Thyroid gland (tissue), 4 donors: ENCODE measurements at regions of chr1 and their contacts with region 1.

Region 1: DNA sequence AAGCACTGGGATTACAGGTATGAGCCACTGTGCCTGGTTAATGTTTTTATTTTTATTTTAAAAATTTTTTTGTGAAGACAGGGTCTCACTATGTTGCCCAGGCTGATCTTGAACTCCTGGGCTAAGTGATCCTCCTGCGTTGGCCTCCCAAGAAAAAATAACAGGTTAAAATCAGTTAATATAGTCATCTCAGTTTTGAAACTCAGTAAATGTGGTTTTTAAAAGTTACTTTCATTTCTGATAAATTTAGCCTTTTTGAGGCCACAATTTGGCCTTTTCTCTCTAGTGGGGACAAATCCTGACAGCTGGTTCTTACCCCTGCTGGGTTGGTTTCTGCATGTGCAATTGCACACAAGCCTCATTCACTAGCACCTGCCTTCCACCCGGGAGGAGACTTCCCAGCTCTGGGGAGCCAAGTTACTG is 13.3 kb downstream of the PMF1 start:
- DNase-seq: no peak
- H3K4me3 ChIP-seq: no peak overlapping the region
- H3K27ac ChIP-seq: peak overlapping the region in 1 of 3 donors; percentile 26
- H3K4me1 ChIP-seq: peaks cover 0 to 4% of the 10 kb centered on the region in 2 donors
- H3K27me3 ChIP-seq: no peaks in the 10 kb centered on the region
- CTCF ChIP-seq: no peak
- POLR2A ChIP-seq: no peak

Region 2: DNA sequence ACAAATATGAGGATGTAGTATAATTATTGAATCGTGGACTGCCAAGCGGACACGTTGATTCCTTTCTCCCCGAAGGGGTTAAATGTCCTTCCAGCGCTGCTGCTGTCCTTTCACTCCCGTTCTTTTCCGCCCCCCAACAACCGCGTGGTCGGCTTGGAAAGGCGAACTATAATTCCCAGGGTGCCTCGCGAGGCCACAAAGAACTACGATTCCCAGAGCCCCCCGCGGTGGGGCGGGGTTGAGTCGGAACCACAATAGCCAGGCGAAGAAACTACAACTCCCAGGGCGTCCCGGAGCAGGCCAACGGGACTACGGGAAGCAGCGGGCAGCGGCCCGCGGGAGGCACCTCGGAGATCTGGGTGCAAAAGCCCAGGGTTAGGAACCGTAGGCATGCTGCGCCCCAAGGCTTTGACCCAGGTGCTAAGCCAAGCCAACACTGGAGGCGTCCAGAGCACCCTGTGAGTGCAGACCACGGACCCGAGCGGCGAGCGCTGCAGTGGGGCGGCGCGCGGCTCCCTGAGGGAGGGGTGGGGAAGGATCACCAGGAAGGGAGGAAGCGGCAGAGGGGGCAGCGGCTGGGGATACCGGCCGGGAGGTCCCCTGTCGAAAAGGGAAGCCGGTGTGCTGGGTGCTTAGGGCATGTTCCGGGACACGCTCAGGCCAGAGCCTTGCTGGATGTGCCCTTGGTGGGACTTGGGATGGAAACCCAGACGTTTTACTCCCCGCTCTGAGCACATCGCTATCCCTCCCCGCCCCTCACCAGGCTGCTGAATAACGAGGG is 171.4 kb before region 1 on chr1 and contains the start of gene LAMTOR2:
- intact Hi-C with region 1: no loop called
- DNase-seq: peak; percentile 98 to 99
- H3K4me3 ChIP-seq: peak within 1 kb of the TSS; percentile 60 to 88 (median 84)
- H3K27ac ChIP-seq: peak within 1 kb of the TSS; percentile 76 to 88 (median 83)
- H3K4me1 ChIP-seq: peaks cover 8 to 9% of the 10 kb centered on the region in 2 donors
- H3K27me3 ChIP-seq: no peaks in the 10 kb centered on the region
- CTCF ChIP-seq: peak in 1 of 6 experiments; percentile 7
- POLR2A ChIP-seq: peak in 1 of 2 donors; percentile 79
- total RNA-seq, gene LAMTOR2: 14.7 to 76.8 (median 41.1) TPM

Region 3: GRCh38 chr1:156096640-156097391 is 129.3 kb before region 1 on chr1:
- intact Hi-C with region 1: loop called (anchors 5 kb)
- DNase-seq: peak; percentile 91 to 92
- H3K4me3 ChIP-seq: no peak overlapping the region
- H3K27ac ChIP-seq: peak overlapping the region; percentile 23 to 89 (median 64)
- H3K4me1 ChIP-seq: peaks cover 8 to 31% of the 10 kb centered on the region in 2 donors
- H3K27me3 ChIP-seq: no peaks in the 10 kb centered on the region
- CTCF ChIP-seq: peak; percentile 88 to 98 (median 94)
- POLR2A ChIP-seq: no peak

Region 4: DNA sequence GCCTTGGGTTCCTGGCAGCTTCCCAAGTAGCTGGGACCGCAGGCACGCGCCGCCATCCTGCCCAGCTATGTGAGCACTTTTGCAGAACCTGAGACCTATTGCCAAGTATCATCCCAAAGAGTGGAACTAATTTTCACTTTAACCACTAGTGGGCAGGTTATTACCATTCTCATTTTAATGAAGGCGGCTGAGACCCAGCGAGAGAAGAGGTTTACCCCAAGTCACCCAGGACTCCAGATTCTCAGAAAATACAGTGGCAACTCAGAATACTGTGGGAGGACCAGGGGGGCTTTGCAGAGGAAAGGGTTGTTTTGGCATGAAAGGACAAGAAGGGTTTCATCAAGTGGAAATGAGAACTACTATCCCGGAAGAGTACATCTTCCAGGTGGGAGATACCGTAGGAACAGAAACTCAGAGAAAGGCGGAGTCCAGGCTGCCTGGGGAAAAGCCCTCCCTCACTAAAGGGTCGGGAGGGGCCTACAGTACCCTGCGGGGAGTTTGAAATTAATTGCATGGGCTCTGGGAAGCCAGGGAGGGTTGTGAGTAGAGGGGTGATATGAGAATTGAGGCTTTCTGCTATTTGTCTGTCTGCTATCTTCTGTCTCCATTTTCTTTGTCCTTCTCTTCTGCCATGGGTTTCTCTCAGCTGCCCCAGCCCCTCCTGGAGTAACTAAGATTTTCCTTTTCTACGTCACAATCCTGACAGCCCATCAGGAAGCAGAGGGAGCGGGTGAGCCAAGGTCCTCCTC is 79.9 kb before region 1 on chr1:
- intact Hi-C with region 1: loop called (anchors 5 kb)
- DNase-seq: peak; percentile 88
- H3K4me3 ChIP-seq: no peak overlapping the region
- H3K27ac ChIP-seq: peak overlapping the region; percentile 70 to 79 (median 71)
- H3K4me1 ChIP-seq: peaks cover 20 to 30% of the 10 kb centered on the region in 2 donors
- H3K27me3 ChIP-seq: no peaks in the 10 kb centered on the region
- CTCF ChIP-seq: peak; percentile 37 to 88 (median 74)
- POLR2A ChIP-seq: no peak